Thyroid gland (tissue), 4 donors: ENCODE measurements at regions of chr1 and their contacts with region 1.

Region 1: DNA sequence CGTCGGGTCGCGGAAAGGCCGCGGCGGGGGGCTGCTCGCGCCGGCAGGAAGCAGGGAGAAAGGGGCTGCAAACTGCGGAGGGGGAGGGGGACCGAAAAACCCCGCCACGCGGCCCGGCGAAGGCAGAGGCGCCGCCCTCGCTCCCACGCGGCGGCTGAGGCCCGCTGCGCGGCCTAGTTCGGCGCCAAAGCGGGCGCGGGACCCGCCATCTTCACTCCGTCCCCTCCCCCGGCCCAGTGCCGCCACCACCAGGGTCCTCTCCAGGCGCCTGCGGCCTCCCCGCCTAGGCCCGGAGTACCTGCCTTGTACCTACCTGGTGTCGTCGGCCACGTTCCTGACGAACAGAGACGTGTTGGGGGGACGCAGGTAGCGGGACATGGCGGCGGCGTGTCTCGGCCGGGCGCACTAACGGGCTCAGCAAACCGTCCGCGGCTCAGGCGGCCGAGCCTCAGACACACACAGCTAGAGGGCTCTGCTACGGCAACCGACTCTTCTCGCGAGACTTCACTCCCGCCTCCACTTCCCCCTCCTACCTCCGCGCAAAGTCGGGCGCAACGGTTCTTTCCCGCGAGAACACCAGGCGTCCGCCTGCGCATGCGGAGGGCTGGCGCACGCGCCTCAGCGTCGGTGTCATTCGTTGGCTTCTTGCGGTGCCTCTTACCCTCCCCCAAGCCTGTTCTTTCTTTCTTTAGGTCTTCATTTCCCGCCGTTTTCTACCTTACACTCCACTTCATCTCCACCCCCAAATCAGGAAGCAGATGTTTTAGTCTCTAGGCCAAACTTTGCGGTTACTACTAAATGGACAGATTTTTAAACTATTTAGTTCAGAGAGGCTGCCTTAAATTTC is at the start of gene SRSF10:
- DNase-seq: peak; percentile 97
- H3K4me3 ChIP-seq: peak within 1 kb of the TSS; percentile 70 to 94 (median 91)
- H3K27ac ChIP-seq: peak within 1 kb of the TSS; percentile 95 to 99 (median 98)
- H3K4me1 ChIP-seq: peaks cover 44 to 70% of the 10 kb centered on the region in 2 donors
- H3K27me3 ChIP-seq: no peaks in the 10 kb centered on the region
- CTCF ChIP-seq: peak in 4 of 6 experiments; percentile 18 to 35 (median 24)
- POLR2A ChIP-seq: peak; percentile 97 to 98
- total RNA-seq, gene SRSF10: 158 to 193 (median 172) TPM

Region 2: DNA sequence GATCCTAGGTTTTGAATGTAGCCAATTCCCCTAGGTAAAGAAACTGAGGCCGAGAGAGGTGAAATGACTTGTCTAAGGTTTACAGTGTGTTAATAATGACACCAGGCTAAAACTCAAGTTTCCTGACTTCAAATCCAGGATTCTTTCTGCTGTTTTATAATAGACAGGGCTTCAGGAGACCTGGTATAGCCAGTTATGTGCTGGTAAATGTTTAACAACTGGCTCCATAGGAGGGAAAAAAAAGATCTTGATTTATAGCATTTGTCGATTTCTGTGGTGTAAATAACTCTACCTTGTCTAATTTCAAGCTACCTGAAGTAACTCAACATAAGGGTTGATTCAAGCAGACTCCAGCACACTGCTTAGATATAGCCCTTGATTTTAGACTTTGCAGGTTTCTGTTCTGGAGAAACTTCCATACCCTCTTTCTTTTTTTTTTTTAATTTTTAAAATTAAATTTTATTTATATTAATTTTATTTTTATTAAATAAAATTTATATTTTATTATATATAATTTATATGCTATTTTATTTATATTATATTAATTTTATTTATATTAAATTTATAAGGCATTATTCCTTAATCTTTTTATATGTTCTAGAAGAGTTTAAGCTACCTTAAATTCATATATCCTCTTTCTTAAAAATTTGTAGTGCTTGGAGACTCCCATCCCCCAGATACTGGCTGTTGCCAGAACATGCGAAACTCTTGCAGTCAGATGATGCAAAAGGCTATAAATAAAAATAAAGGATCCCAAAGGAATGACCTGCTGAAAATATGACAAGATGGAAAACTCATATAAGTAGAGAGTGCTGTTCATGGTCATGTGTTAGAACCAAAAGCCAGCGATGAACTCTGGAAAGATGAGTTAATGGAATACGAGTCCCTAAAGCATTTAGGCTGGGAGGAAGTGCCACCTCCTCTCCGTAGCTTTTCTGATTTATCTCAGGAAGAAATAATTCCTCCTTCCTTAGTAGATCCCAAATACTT is 35.4 kb after region 1 on chr1:
- intact Hi-C with region 1: loop called (anchors 2 kb)
- DNase-seq: no peak
- H3K4me3 ChIP-seq: no peak overlapping the region
- H3K27ac ChIP-seq: peak overlapping the region; percentile 45 to 99 (median 99)
- H3K4me1 ChIP-seq: peaks cover 36 to 61% of the 10 kb centered on the region in 2 donors
- H3K27me3 ChIP-seq: no peaks in the 10 kb centered on the region
- CTCF ChIP-seq: no peak
- POLR2A ChIP-seq: no peak

Region 3: DNA sequence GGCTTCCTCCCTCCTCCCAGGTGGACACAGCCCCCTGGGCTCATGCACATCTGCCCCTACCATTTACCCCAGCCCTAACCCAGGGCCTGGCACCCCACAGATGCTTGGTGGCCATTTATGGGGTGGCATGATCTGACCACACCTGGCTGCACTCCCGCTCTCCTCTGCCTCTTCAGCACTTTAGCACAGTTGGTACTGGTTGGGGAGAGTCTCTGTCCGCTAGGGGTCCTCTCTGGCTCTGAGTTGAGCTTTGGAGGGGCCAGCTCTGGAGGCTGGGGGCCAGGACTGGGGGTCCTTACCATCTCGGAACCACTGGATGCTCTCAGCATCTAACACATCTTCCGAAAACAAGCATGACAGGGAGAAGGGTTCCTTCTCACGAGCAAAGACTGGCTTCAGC is 114.5 kb after region 1 on chr1:
- intact Hi-C with region 1: no loop called
- DNase-seq: no peak
- H3K4me3 ChIP-seq: no peak overlapping the region
- H3K27ac ChIP-seq: no peak overlapping the region
- H3K4me1 ChIP-seq: peaks cover 0 to 11% of the 10 kb centered on the region in 2 donors
- H3K27me3 ChIP-seq: no peaks in the 10 kb centered on the region
- CTCF ChIP-seq: no peak
- POLR2A ChIP-seq: no peak